Activated B cell treated with CpG ODN at 0.5 μM for 24 hours (primary cell): ENCODE measurements at regions of chr21 and their contacts with region 1.

Region 1: GRCh38 chr21:35840197-35840799 is 220.0 kb downstream of the SETD4 start:
- DNase-seq: no peak
- ATAC-seq: no peak
- H3K4me3 Mint-ChIP-seq: no peak overlapping the region
- H3K27ac Mint-ChIP-seq: no peak overlapping the region
- H3K4me1 Mint-ChIP-seq: no peaks in the 10 kb centered on the region
- H3K27me3 Mint-ChIP-seq: peaks cover 6% of the 10 kb centered on the region
- CTCF ChIP-seq: peak; percentile 70

Region 2: GRCh38 chr21:34693192-34693810 is 1147.0 kb before region 1 on chr21:
- CTCF ChIA-PET with region 1: interaction called, 104 read pairs
- POLR2A ChIA-PET with region 1: no interaction called
- intact Hi-C with region 1: loop called (anchors 1 kb)
- DNase-seq: no peak
- ATAC-seq: no peak
- H3K4me3 Mint-ChIP-seq: no peak overlapping the region
- H3K27ac Mint-ChIP-seq: no peak overlapping the region
- H3K4me1 Mint-ChIP-seq: no peaks in the 10 kb centered on the region
- H3K27me3 Mint-ChIP-seq: peaks cover 13% of the 10 kb centered on the region
- CTCF ChIP-seq: peak; percentile 72

Region 3: GRCh38 chr21:34722684-34723300 is 1117.5 kb before region 1 on chr21:
- CTCF ChIA-PET with region 1: interaction called, 14 read pairs
- POLR2A ChIA-PET with region 1: interaction called, 3 read pairs
- intact Hi-C with region 1: loop called (anchors 1 kb)
- DNase-seq: no peak
- ATAC-seq: no peak
- H3K4me3 Mint-ChIP-seq: no peak overlapping the region
- H3K27ac Mint-ChIP-seq: no peak overlapping the region
- H3K4me1 Mint-ChIP-seq: no peaks in the 10 kb centered on the region
- H3K27me3 Mint-ChIP-seq: peaks cover 13% of the 10 kb centered on the region
- CTCF ChIP-seq: no peak

Region 4: DNA sequence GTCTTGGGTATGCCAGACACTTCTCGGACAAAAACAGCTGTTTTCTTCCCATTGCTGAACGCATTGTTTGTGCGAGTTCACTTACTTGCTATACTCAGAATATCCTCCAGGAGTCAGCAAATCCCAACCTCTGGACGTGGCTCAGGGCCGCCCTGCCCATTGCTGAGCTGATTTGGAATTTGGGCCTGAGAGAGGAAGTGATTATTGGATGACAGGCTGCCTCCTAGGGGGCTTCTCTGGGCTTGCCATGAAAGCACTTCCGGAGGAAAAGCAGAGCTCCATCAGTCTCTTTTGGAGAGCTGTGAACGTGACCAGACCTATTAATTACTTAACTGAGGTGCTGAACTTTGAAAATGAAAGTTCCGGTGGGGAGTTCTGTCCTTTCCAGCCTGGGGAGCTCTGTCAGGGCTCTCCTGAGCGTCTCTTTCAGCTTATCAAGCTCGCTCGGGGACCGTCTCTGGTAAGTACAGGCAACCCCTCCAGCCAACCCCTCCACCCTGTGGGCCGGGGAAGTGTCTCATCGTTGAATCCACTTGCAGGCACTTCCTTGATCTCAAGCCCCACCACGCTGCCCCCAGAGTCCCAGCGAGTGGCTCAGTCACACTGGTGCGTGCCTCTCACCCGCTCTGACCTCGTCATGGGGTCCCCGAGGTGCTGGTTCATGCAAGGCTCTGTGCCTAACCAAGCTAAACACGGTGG is 1094.6 kb before region 1 on chr21:
- CTCF ChIA-PET with region 1: interaction called, 121 read pairs
- POLR2A ChIA-PET with region 1: interaction called, 5 read pairs
- intact Hi-C with region 1: loop called (anchors 1 kb)
- DNase-seq: peak; percentile 33
- ATAC-seq: peak; percentile 95
- H3K4me3 Mint-ChIP-seq: peak overlapping the region; percentile 72
- H3K27ac Mint-ChIP-seq: no peak overlapping the region
- H3K4me1 Mint-ChIP-seq: peaks cover 5% of the 10 kb centered on the region
- H3K27me3 Mint-ChIP-seq: peaks cover 16% of the 10 kb centered on the region
- CTCF ChIP-seq: peak; percentile 36

Region 5: DNA sequence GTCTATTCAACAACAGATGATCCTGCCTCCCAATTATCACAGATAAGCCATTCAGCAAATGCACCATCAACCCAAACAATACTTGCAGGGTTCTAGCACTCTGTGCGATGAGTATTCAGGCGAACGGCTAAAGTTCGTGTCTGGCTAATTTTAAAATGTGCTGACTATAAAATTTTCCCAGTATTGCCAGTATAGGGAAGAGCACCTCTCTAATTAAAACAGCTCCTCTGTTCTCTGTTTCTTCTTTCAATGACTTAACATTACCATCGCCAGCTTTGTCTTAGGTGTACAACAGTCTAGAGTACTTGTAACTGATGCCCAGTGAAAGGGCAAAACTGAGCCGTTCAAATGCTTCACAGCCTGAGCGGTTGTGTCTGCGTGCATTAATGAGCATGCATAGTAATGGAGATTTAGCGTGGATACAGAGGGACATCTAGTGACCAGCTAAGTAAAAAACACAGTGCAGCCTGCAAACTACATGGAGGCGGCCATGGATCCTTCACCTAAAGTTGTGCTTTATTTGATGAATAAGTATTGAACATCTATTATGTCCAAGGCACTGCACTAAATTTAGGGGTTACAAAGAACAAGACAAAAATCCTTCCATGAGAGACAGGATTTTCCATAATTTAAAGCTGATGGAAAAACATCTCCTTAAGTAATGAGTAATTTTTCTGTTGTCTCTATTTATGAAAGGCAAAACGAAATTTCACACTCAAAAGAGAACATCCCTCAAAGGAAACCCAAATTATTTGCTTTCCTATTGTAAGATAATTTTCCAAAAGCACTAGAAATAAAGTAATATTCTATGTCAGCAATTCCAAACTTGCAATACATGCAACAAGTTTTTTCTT is 100.0 kb after region 1 on chr21:
- CTCF ChIA-PET with region 1: interaction called, 4 read pairs
- POLR2A ChIA-PET with region 1: no interaction called
- intact Hi-C with region 1: loop called (anchors 1 kb)
- DNase-seq: no peak
- ATAC-seq: peak; percentile 71
- H3K4me3 Mint-ChIP-seq: no peak overlapping the region
- H3K27ac Mint-ChIP-seq: no peak overlapping the region
- H3K4me1 Mint-ChIP-seq: peaks cover 2% of the 10 kb centered on the region
- H3K27me3 Mint-ChIP-seq: peaks cover 3% of the 10 kb centered on the region
- CTCF ChIP-seq: no peak

Region 6: DNA sequence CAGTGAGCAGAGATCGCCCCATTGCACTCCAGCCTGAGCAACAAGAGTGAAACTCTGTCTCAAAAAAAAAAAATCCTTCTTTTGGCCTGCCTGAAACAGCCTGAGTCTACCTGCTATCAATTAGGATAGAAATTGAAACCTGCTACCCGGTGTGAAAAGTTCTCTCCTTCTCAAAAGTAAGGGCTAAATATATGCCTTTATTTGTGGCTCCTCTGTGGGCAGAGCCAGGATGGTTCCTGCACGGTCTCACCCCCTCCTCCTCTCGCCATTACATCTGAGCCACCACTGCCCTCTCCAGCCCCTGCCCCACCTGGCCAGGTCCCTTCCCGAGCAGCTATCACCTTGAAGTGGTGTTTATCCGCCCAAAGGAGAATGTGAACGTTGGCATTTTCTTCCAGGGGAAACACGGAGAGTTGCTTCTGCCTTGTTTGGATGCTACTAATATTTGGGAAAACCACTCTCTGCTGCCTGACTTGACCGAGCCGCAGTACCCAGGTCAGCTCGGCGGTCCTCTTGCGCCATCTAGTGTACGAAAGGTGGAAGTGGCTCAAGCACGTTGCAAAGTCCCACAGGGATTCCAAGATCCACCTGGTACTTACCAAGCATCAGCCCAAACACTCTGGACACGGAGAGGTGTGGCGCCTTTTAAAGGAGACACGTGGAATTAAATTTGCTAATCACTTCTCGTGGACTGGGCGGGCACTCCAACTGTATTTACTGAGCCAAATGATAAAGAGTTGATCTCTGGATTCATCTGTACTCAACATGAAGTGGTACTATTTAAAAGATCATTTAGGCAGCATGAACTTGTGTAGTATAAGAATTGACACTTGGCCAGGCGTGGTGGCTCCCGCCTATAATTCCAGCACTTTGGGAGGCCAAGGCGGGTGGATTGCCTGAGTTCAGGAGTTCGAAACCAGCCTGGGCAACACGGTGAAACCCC is 188.1 kb after region 1 on chr21:
- CTCF ChIA-PET with region 1: interaction called, 16 read pairs
- POLR2A ChIA-PET with region 1: no interaction called
- intact Hi-C with region 1: loop called (anchors 1 kb)
- DNase-seq: peak; percentile 49
- ATAC-seq: peak; percentile 90
- H3K4me3 Mint-ChIP-seq: no peak overlapping the region
- H3K27ac Mint-ChIP-seq: no peak overlapping the region
- H3K4me1 Mint-ChIP-seq: peaks cover 5% of the 10 kb centered on the region
- H3K27me3 Mint-ChIP-seq: no peaks in the 10 kb centered on the region
- CTCF ChIP-seq: peak; percentile 85

Region 7: DNA sequence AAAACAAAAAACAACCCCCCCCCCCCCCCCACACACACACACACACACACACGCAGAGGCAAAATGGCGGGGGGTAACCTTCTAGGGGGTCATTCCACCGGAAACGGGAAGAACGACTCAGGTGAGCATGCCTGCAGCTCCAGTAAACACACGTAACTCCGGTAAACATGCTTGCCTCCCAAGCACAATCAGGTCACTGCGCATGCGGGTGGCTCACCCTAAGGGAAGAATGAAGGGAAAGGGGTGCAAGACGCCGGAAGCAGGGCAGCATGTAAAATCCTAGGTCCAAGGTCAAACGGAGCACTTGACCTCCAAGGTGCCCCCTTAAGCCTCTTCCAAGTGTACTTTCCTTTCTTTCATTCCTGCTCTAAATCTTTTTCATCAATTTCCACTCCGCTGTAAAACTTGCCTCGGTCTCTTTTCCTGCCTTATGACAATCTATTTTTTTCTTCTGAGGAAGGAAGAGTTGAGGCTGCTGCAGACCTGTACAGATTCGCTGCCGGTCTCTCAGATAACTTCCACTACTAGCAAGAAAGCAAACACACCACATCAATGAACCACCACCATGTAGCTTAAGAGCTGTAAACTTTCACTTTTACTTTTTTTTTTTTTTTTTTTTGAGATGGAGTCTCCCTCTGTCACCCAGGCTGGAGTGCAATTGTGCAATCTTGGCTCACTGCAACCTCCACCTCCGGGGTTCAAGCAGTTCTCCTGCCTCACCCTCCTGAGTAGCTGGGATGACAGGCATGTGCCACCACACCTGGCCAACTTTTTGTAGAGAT is 273.5 kb after region 1 on chr21:
- CTCF ChIA-PET with region 1: interaction called, 3 read pairs
- POLR2A ChIA-PET with region 1: no interaction called
- intact Hi-C with region 1: loop called (anchors 1 kb)
- DNase-seq: no peak
- ATAC-seq: no peak
- H3K4me3 Mint-ChIP-seq: peak overlapping the region; percentile 75
- H3K27ac Mint-ChIP-seq: peak overlapping the region; percentile 80
- H3K4me1 Mint-ChIP-seq: peaks cover 30% of the 10 kb centered on the region
- H3K27me3 Mint-ChIP-seq: no peaks in the 10 kb centered on the region
- CTCF ChIP-seq: no peak